Activated B cell treated with CpG ODN at 0.5 μM for 24 hours (primary cell): ENCODE measurements at regions of chr13 and their contacts with region 1.

Region 1: DNA sequence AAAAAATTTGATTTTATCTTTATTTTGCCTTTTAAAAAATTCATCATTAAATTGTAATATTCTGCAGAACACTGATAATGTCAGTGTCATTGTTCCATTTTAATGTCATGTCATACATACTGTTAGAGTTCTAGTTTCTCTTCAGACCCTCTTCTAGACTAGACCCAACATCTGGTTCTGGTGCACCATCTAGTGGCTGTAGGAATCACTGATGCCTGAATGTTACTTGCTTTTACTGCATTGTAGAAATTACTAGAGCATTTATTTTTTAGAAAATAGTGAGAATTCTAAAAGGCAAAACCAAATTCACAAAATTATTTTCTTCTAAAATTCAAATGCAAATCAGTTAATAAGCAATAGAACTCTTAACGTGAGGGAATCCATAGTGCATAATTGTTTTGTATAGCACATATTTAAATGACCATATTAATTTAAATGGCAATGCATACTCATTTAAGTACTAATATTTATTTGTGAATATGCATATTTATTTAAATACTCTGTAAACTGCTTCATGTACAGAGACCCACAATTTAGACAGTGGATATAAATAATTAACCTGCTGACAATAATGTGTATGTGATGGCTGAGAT is 425.7 kb downstream of the KLF12 start:
- DNase-seq: no peak
- ATAC-seq: peak; percentile 45
- H3K4me3 Mint-ChIP-seq: no peak overlapping the region
- H3K27ac Mint-ChIP-seq: no peak overlapping the region
- H3K4me1 Mint-ChIP-seq: peaks cover 2% of the 10 kb centered on the region
- H3K27me3 Mint-ChIP-seq: no peaks in the 10 kb centered on the region
- CTCF ChIP-seq: no peak

Region 2: DNA sequence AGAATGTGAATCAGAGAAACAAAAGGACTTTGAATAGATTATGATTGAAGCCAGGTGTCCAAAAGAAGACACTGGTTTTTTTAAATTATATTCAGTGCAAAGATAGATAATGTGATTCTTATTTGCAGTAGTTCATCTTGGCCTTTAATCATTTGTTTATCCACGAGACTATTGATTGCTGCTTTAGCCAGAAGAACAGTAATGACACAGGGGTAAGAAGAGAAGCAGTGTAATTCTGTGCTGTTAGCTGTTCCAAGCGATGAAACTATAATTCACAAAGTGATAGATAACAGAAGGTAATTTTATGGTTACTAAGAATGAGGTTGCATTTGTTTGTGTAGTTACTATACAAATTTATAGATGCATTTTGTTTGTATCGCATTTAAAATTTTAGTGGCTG is 1292.7 kb before region 1 on chr13:
- CTCF ChIA-PET with region 1: no interaction called
- POLR2A ChIA-PET with region 1: no interaction called
- intact Hi-C with region 1: no loop called
- DNase-seq: no peak
- ATAC-seq: no peak
- H3K4me3 Mint-ChIP-seq: no peak overlapping the region
- H3K27ac Mint-ChIP-seq: no peak overlapping the region
- H3K4me1 Mint-ChIP-seq: no peaks in the 10 kb centered on the region
- H3K27me3 Mint-ChIP-seq: no peaks in the 10 kb centered on the region
- CTCF ChIP-seq: no peak

Region 3: DNA sequence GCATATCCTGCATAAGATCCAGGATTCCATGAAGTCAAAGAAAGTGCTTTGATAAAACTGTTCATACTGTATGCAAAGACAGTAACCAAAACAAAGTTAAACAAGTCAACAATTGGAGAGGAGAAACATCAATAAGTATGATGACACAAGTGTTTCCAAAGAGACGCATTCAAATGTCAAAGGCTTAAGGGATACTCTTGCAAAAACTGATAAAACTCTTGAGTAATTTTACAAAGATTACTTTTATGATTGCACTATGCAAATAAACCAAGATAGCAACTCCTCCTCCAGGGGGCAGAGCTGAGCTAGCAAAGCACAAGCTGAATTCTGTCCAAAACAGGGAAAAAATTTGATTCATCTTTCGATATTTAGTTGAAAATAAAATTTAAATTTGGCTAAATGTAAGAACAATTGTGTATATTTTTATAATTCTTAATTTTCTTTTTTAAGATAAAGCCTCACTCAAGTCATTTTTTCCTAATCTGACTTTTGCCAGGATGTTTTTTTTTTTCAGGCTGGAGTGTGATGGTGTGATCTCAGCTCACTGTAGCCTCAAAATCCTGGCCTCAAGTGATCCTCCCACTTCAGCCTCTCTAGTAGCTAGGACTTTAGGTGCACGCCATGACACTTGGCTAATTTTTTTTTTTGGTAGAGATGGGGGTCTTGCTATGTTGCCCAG is 1065.0 kb before region 1 on chr13:
- CTCF ChIA-PET with region 1: no interaction called
- POLR2A ChIA-PET with region 1: no interaction called
- intact Hi-C with region 1: loop called (anchors 10 kb)
- DNase-seq: no peak
- ATAC-seq: no peak
- H3K4me3 Mint-ChIP-seq: no peak overlapping the region
- H3K27ac Mint-ChIP-seq: no peak overlapping the region
- H3K4me1 Mint-ChIP-seq: no peaks in the 10 kb centered on the region
- H3K27me3 Mint-ChIP-seq: no peaks in the 10 kb centered on the region
- CTCF ChIP-seq: no peak

Region 4: GRCh38 chr13:72808917-72809500 is 899.5 kb before region 1 on chr13:
- CTCF ChIA-PET with region 1: no interaction called
- POLR2A ChIA-PET with region 1: no interaction called
- intact Hi-C with region 1: loop called (anchors 1 kb)
- DNase-seq: no peak
- ATAC-seq: no peak
- H3K4me3 Mint-ChIP-seq: no peak overlapping the region
- H3K27ac Mint-ChIP-seq: no peak overlapping the region
- H3K4me1 Mint-ChIP-seq: no peaks in the 10 kb centered on the region
- H3K27me3 Mint-ChIP-seq: no peaks in the 10 kb centered on the region
- CTCF ChIP-seq: peak; percentile 92

Region 5: DNA sequence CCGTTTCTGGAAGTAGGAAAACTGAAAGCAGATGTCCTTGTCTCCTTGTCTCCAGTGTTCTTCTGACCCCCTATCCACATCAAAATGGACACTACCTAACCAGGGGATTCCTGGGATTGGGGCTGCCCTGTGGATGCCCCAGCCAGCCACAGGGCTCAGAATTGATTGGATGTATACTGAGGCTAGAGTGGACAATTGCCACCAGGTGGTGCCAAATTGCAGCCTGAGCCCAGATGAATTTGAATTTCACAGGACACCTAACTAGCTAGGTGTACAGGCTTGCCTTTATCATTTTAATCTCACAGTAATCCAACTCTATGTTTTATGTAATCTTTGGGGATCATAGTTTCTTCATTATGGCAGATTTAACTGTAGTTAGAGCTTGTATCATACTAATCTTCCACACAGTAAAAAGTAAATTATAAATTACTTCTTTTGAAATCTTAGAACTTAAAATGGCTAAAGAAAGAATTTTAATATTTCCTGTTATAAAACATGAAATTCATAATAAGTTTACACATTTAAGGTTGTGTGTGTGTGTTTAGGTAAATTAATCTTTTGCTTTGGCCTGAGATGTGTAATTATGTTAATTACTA is 868.6 kb before region 1 on chr13:
- CTCF ChIA-PET with region 1: no interaction called
- POLR2A ChIA-PET with region 1: no interaction called
- intact Hi-C with region 1: loop called (anchors 1 kb)
- DNase-seq: no peak
- ATAC-seq: peak; percentile 56
- H3K4me3 Mint-ChIP-seq: no peak overlapping the region
- H3K27ac Mint-ChIP-seq: no peak overlapping the region
- H3K4me1 Mint-ChIP-seq: no peaks in the 10 kb centered on the region
- H3K27me3 Mint-ChIP-seq: no peaks in the 10 kb centered on the region
- CTCF ChIP-seq: no peak

Region 6: DNA sequence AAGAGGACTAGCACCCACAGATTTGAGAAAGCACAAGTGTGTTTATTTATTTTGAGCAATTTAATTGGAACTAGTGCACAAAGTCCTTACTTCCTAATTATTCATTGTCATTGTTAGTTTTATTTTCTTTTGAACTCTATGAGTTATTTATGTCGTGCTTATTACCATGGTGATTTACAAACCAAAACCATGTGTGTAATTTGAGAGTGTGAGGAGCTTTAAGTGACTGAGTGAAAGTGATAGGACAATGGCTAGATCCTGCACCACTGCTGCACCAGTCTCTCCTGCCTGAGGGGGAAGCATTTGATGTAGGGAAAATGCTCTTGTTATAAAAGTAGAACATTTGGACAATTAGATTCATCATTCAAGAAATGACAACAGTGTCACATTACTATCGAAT is 598.0 kb after region 1 on chr13:
- CTCF ChIA-PET with region 1: no interaction called
- POLR2A ChIA-PET with region 1: no interaction called
- intact Hi-C with region 1: no loop called
- DNase-seq: no peak
- ATAC-seq: no peak
- H3K4me3 Mint-ChIP-seq: no peak overlapping the region
- H3K27ac Mint-ChIP-seq: no peak overlapping the region
- H3K4me1 Mint-ChIP-seq: no peaks in the 10 kb centered on the region
- H3K27me3 Mint-ChIP-seq: peaks cover 9% of the 10 kb centered on the region
- CTCF ChIP-seq: no peak